B cell (primary cell): ENCODE measurements at regions of chr11 and their contacts with region 1.

Region 1: DNA sequence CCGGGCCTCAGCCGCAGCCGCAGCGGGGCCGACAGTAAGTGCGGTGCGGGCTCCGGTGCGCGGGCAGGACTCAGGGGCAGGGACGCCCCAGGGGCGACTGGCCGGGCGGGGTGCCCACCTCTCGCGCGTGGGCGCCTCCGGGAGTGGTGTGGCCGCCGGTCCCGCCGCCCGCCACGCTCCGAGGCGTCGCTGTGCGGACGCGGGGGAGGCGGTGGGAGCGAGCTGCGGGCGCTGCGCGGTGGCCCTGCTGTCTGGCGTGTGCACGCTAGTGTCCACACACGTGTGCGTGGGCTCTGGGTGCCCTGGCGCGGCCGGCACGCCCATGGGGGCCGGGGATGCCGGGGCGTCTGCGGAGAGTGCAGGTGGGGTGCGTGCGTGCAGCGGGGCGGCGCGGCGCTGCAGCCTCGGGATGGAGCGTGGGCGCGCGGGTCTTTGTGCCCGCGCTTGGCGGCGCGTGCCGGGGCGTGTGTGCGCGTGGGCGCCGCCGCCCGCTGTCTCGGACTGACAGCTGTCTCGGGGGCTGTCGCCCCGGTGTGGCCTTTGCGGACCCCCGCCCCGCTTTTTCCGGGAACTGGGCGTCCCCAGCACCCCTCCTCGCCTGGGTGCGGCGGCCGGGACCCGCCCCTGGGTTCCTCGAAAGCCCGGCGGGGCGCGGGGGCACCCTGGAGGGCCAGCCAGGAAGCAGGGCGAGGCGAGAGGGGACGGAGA is 804 bp downstream of the KCNK4 start:
- DNase-seq: peak; percentile 61
- ATAC-seq: peak; percentile 35
- H3K4me3 ChIP-seq: peak overlapping the region in 3 of 5 experiments; percentile 32 to 54 (median 45)
- H3K4me3 Mint-ChIP-seq: no peak overlapping the region
- H3K27ac ChIP-seq: no peak overlapping the region
- H3K27ac Mint-ChIP-seq: no peak overlapping the region
- H3K4me1 ChIP-seq: peaks cover 8 to 24% of the 10 kb centered on the region in 2 donors
- H3K4me1 Mint-ChIP-seq: peaks cover 8% of the 10 kb centered on the region
- H3K27me3 ChIP-seq: peaks cover 0 to 58% (median 42%) of the 10 kb centered on the region in 4 experiments
- H3K27me3 Mint-ChIP-seq: peaks cover 38% of the 10 kb centered on the region
- CTCF ChIP-seq: no peak

Region 2: DNA sequence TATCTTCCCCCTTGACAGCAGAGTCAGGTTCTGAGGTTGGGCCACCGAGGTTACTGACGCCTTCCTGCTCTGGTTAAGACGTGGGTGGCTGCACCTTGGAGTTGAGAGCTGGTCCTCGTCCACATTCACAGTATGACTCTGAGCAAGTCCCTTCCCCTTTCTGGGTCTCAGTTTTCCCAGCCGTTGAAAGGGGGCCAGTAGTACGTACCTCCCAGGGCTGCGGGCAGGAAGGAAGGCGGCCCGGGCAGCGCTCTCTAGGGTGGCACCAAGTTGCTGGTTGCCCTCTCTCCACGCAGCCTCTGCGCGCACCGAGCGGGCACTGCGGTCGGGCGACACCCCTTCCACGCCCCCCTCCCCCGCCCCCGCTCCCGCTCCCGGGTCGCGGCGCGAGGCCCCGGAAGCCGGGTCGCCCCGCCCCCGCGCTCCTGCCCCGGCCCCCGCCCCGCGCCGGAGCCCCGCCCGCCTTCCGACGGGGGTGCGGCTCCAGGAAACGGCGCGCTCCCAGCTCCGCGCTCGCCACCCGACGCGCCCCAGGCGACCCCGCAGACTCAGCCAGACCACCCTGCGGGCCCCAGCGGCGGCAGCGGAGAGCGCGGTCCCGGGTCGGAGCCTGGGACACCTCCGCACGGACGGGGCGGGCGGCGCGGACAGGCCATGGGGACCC is 1283.8 kb after region 1 on chr11 and contains the start of gene EHBP1L1:
- CTCF ChIA-PET with region 1: no interaction called
- POLR2A ChIA-PET with region 1: interaction called, 10 read pairs
- intact Hi-C with region 1: no loop called
- DNase-seq: peak; percentile 82
- ATAC-seq: peak; percentile 39
- H3K4me3 ChIP-seq: peak within 1 kb of the TSS; percentile 55 to 92 (median 70)
- H3K4me3 Mint-ChIP-seq: peak within 1 kb of the TSS; percentile 98
- H3K27ac ChIP-seq: peak within 1 kb of the TSS; percentile 92 to 94
- H3K27ac Mint-ChIP-seq: peak within 1 kb of the TSS; percentile 98
- H3K4me1 ChIP-seq: peaks cover 41 to 62% of the 10 kb centered on the region in 2 donors
- H3K4me1 Mint-ChIP-seq: peaks cover 61% of the 10 kb centered on the region
- H3K27me3 ChIP-seq: no peaks in the 10 kb centered on the region
- H3K27me3 Mint-ChIP-seq: no peaks in the 10 kb centered on the region
- CTCF ChIP-seq: no peak
- total RNA-seq, gene EHBP1L1: 202 and 224 TPM in 2 replicates